ENCODE measurements at regions of chr17 and their contacts with region 1.

Region 1: GRCh38 chr17:1399679-1400512 is at the start of gene YWHAE:
- DNase-seq: peak; percentile 96
- H3K4me3 ChIP-seq: peak within 1 kb of the TSS; percentile 75 to 97 (median 90)
- H3K27ac ChIP-seq: peak within 1 kb of the TSS; percentile 96
- H3K4me1 ChIP-seq: peaks cover 9% of the 10 kb centered on the region
- H3K27me3 ChIP-seq: no peaks in the 10 kb centered on the region
- CTCF ChIP-seq: no peak
- total RNA-seq, gene YWHAE: 528 to 689 TPM

Region 2: GRCh38 chr17:1447052-1447451 is 47.2 kb after region 1 on chr17:
- CTCF ChIA-PET with region 1: no interaction called
- dilution Hi-C with region 1: loop called (anchors 5 kb)
- in situ Hi-C with region 1: no loop called
- intact Hi-C with region 1: no loop called
- DNase-seq: no peak
- H3K4me3 ChIP-seq: no peak overlapping the region
- H3K27ac ChIP-seq: no peak overlapping the region
- H3K4me1 ChIP-seq: peaks cover 6% of the 10 kb centered on the region
- H3K27me3 ChIP-seq: no peaks in the 10 kb centered on the region
- CTCF ChIP-seq: no peak

Measured in mammary epithelial cell (primary cell).